ENCODE measurements at regions of chr3 and their contacts with region 1.

Region 1: DNA sequence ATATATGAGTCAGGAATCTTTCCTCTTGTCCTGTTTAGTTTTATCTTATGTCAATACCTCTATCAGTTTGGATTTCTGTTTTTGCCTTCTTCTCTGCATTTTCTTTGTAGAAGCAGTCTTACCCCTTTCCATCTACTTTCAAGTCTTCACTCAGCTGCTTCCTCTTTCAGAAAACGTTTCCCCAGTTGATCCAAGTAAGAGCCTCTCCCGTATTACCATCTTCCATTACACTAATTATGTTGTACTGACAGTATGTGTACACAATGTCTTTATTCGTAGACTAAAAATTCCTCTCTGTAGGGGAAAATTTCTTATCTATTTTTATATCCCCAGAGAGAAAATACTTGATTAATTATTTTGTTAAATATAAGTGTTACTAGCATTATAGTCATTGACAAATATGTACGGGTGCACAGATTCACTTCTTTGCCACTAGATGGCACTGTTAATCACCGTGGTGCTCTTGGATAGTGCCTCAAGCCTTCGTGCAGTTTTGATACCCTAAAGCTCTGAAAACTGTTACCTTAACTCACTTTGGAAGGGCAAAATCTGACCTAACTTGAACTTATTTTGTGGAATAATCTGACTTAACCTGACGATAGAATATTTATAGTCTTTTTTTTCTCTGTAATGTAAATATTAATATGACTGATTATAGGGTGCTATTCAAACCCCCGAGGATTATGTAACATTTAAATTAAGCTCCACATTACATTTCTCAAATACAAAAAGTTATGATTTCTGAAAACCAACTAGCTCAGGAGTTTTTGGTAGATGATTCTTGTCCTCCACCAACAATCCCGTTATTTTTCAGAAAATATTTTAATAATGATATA is 74.2 kb upstream of the POU1F1 start:
- DNase-seq: peak; percentile 59
- CTCF ChIP-seq: peak; percentile 83

Region 2: DNA sequence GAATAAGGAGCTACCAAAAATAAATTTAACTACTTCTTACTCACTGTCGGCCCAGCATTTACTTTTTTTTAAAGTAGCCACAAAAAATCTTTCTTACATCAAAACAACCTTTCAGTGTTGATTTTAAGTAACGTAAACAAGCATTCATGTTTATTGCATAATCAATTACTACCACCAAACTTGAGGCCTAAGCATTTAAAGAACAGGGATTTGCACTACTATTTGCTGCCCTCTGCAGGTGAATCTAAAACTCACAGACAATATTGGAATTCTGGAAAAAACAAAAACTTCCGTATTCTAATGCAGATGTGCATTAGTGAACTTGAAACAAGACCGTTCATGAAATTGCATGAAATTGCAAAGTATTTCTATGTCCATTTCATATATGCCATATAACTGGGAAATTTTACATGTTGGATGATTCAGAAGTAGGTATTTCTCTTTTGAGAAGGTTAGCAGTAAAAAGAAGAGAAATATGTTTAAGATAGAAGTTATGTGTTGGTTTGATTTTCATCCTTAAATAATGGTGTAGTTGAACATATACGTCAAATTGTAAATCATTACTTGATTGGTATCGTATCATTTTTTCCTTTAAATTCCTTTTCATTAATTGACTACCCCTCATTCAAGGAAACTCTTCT is 652.7 kb after region 1 on chr3:
- in situ Hi-C with region 1: loop called (anchors 25 kb)
- DNase-seq: peak; percentile 27
- CTCF ChIP-seq: peak; percentile 34